Psoas muscle (tissue), 8 donors: ENCODE measurements at regions of chr13 and their contacts with region 1.

Region 1: GRCh38 chr13:101127741-101128353 is 288.5 kb downstream of the NALCN start:
- DNase-seq: no peak
- ATAC-seq: no peak
- H3K4me3 ChIP-seq: no peak overlapping the region
- H3K27ac ChIP-seq: no peak overlapping the region
- H3K4me1 ChIP-seq: no peaks in the 10 kb centered on the region
- H3K27me3 ChIP-seq: no peaks in the 10 kb centered on the region
- CTCF ChIP-seq: peak; percentile 48

Region 2: GRCh38 chr13:100483841-100484381 is 643.9 kb before region 1 on chr13:
- intact Hi-C with region 1: no loop called
- DNase-seq: no peak
- ATAC-seq: no peak
- H3K4me3 ChIP-seq: no peak overlapping the region
- H3K27ac ChIP-seq: no peak overlapping the region
- H3K4me1 ChIP-seq: no peaks in the 10 kb centered on the region
- H3K27me3 ChIP-seq: no peaks in the 10 kb centered on the region
- CTCF ChIP-seq: no peak

Region 3: GRCh38 chr13:100573121-100573520 is 554.7 kb before region 1 on chr13:
- intact Hi-C with region 1: loop called in 1 of 2 experiments (anchors 5 kb)
- DNase-seq: peak; percentile 51 to 68
- ATAC-seq: peak; percentile 65 to 88 (median 72)
- H3K4me3 ChIP-seq: no peak overlapping the region
- H3K27ac ChIP-seq: no peak overlapping the region
- H3K4me1 ChIP-seq: no peaks in the 10 kb centered on the region
- H3K27me3 ChIP-seq: no peaks in the 10 kb centered on the region
- CTCF ChIP-seq: peak; percentile 73

Region 4: GRCh38 chr13:100954430-100955305 is 173.2 kb before region 1 on chr13:
- intact Hi-C with region 1: no loop called
- DNase-seq: no peak
- ATAC-seq: no peak
- H3K4me3 ChIP-seq: no peak overlapping the region
- H3K27ac ChIP-seq: no peak overlapping the region
- H3K4me1 ChIP-seq: no peaks in the 10 kb centered on the region
- H3K27me3 ChIP-seq: no peaks in the 10 kb centered on the region
- CTCF ChIP-seq: no peak

Region 5: DNA sequence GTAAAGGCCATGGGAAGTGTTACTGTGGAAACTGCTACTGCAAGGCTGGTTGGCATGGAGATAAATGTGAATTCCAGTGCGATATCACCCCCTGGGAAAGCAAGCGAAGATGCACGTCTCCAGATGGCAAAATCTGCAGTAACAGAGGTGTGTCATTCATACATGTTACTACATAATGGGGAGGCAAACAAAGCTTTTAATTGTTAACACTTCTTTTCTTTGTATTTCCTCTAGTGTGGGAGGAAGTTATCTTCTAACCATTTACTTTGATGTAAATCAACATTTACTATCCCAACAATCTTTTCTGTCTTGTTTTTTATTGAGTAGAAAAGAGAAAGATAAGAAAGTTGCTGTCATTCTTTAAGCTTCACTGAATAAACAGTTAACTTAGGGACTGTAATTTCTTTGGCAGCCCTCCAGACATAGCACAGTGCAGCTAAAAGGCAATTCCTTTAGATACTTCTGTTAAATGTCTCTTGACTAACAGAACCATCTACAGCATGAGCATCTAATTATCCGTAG is 451.5 kb after region 1 on chr13:
- intact Hi-C with region 1: no loop called
- DNase-seq: no peak
- ATAC-seq: no peak
- H3K4me3 ChIP-seq: no peak overlapping the region
- H3K27ac ChIP-seq: no peak overlapping the region
- H3K4me1 ChIP-seq: no peaks in the 10 kb centered on the region
- H3K27me3 ChIP-seq: no peaks in the 10 kb centered on the region
- CTCF ChIP-seq: no peak